ENCODE measurements at regions of chr5 and their contacts with region 1.

Region 1: GRCh38 chr5:137660349-137660817 is 75.5 kb downstream of the KLHL3 start:
- DNase-seq: peak; percentile 84

Region 2: DNA sequence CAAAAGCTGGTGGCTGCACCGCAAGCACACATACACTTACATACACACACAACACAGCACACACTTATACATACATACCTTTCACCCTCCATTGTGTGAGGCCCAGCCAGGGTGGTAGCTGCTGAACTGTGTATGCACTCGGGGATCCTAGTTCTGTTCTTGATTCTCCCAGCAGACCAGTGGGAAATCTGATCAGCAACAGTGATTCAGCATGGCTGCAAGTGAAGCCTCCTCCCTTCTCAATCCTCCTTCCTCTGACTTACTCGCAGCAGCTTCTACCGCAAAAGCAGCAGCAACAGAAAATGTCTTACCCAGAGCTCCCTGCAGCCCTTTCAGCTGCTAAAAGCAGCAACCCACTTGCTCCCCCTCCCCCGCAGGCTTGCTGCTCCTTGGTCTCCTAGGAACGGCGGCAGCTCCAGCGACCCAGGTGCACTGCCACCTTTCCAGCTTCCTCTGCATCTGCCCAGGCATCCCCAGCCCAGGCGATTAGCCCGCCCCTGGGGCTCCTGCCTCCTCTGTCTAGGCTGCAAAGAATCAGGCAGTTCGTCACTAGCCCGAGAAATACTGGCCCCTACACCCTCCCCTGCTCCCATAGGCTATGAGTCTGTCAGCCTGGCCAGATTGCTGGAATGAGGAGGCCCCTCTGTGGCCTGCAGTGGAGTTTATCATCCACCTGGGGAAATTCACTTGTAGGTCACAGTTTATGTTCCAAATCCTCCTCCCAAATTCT is 75.3 kb after region 1 on chr5 and contains the start of gene KLHL3:
- intact Hi-C with region 1: loop called (anchors 1 to 5 kb)
- DNase-seq: no peak
- total RNA-seq, gene KLHL3: 11.4 to 11.5 TPM

Region 3: DNA sequence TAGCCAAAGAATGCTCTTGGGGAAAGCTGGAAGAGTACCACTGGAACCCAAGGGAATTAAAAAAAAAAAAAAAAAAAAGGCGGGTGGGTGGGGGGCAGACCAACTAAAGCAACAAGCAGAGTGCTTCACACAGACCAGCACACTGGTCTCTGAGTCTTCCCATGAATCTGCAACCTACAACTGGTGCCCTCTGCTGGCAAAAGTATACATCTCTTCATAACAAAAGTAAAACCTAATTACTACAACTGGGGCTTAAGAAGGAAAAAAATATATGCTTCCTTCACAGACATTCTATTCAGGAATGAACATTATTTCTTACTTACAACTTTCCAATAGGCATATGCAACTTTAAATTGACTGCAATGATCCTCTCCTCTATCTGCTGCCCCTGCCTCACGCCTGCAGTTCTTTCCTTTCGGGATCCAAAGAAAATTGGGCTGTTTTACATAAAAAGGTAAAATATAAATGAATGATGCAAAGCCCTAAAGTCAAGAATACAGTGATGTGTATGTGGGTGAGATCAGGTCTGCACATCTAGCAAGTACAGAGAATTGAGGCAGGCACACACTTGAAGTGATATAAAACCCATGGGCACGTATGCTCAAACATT is 82.8 kb after region 1 on chr5:
- intact Hi-C with region 1: loop called (anchors 1 to 5 kb)
- DNase-seq: no peak

Measured in posterior vena cava (tissue), 2 donors.